ENCODE measurements at regions of chr12 and their contacts with region 1.

Region 1: GRCh38 chr12:55973598-55974307 is at the start of gene RAB5B:
- DNase-seq: peak; percentile 81 to 100 (median 98)
- ATAC-seq: peak; percentile 92
- H3K4me3 ChIP-seq: peak within 1 kb of the TSS; percentile 84
- H3K4me3 Mint-ChIP-seq: no peak within 1 kb of the TSS
- H3K27ac ChIP-seq: peak within 1 kb of the TSS; percentile 88
- H3K27ac Mint-ChIP-seq: no peak within 1 kb of the TSS
- H3K4me1 ChIP-seq: peaks cover 8 to 19% of the 10 kb centered on the region in 2 donors
- H3K4me1 Mint-ChIP-seq: peaks cover 18 to 31% (median 26%) of the 10 kb centered on the region in 7 donors
- H3K27me3 ChIP-seq: no peaks in the 10 kb centered on the region
- H3K27me3 Mint-ChIP-seq: no peaks in the 10 kb centered on the region
- total RNA-seq, gene RAB5B: 45.2 to 109 (median 62.7) TPM

Region 2: DNA sequence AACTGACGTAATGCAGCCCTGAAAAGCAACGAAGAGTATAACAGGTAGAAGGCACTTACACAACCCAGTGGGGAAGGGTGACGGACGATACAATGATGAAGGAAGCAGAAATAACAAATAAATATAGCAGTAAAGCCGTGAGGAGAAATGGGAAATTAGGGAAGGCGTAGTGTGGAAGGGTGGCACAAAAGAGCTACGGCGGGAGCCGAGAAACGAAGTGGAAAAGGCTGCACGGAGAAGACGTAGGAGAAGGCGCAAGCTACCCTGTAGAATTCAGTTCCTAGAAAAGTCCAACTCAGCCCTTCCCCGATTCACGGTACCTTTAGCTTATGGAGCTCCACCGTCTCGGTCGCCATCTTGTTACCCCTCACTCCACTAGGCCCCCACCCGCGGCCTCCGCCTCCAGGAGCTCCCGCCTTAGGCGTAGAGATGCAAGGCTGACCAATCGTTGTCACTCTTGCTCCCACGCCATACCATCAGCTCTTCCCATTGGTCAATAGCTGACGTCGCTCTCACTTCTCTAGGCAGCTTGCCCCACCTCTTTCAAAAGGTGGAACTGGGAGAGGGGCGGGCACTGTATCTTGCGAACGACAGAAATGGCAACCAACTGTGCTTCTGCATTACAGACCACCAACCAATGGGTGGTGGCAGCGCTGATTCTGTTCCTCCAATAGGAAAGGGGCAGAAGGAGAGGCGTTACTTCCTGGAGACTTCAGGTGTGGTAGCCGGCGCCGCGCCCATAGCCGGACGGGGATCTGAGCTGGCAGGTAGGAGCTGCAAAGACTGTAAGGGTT is 156.2 kb before region 1 on chr12 and contains the starts of genes ORMDL2 and SARNP:
- CTCF ChIA-PET with region 1: interaction called, 7 read pairs
- POLR2A ChIA-PET with region 1: interaction called, 11 read pairs
- intact Hi-C with region 1: loop called (anchors 1 kb)
- DNase-seq: peak; percentile 81 to 99 (median 98)
- ATAC-seq: peak; percentile 96
- H3K4me3 ChIP-seq: peak within 1 kb of the TSS; percentile 94
- H3K4me3 Mint-ChIP-seq: no peak within 1 kb of the TSS
- H3K27ac ChIP-seq: peak within 1 kb of the TSS; percentile 88
- H3K27ac Mint-ChIP-seq: no peak within 1 kb of the TSS
- H3K4me1 ChIP-seq: peaks cover 22 to 41% of the 10 kb centered on the region in 2 donors
- H3K4me1 Mint-ChIP-seq: peaks cover 32 to 45% (median 37%) of the 10 kb centered on the region in 7 donors
- H3K27me3 ChIP-seq: no peaks in the 10 kb centered on the region
- H3K27me3 Mint-ChIP-seq: no peaks in the 10 kb centered on the region
- total RNA-seq, gene ORMDL2: 12.3 to 67.3 (median 40.5) TPM
- total RNA-seq, gene SARNP: 28.0 to 73.0 (median 41.7) TPM

Region 3: DNA sequence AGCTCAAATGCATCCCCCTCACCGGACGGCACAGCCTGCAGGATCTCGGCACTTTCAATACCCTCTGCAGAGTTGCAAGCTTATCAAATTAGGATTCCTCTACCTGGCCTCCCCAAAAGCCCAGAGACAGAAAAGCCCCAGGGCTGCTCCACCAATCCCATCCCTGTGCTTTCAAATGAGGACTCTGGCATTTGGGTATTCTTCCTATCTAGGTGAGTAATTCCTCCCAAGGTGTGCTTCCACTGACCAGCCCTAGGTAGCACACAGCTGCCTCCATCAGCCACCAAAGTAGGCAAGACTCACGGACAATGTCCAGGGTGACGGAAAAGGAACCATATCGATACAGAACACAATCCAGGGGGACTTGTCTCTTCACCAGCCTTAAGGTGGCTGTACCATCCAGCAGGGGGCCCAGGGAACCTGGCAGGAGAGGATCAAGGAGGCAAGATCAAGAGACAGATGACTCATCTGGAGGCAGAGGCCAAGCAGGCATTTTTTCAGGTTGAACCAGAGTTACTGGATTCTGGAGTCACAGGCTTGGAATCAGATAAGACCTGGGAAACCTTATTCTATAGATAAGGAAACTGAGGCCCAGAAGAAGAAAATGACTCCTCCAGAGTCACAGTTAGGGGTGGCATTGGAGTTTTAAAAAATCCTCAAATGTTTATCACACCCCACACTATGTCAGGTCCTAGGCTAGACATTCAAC is 17.8 kb before region 1 on chr12:
- CTCF ChIA-PET with region 1: interaction called, 3 read pairs
- POLR2A ChIA-PET with region 1: interaction called, 50 read pairs
- intact Hi-C with region 1: loop called in 1 of 2 experiments (anchors 2 kb)
- DNase-seq: peak in 4 of 9 donors; percentile 41 to 47 (median 44)
- ATAC-seq: peak; percentile 71
- H3K4me3 ChIP-seq: no peak overlapping the region
- H3K4me3 Mint-ChIP-seq: peak overlapping the region in 1 of 10 donors; percentile 21
- H3K27ac ChIP-seq: peak overlapping the region; percentile 22
- H3K27ac Mint-ChIP-seq: peak overlapping the region; percentile 6 to 90 (median 78)
- H3K4me1 ChIP-seq: peaks cover 4 to 8% of the 10 kb centered on the region in 2 donors
- H3K4me1 Mint-ChIP-seq: peaks cover 12 to 38% (median 21%) of the 10 kb centered on the region in 7 donors
- H3K27me3 ChIP-seq: no peaks in the 10 kb centered on the region
- H3K27me3 Mint-ChIP-seq: no peaks in the 10 kb centered on the region

Region 4: DNA sequence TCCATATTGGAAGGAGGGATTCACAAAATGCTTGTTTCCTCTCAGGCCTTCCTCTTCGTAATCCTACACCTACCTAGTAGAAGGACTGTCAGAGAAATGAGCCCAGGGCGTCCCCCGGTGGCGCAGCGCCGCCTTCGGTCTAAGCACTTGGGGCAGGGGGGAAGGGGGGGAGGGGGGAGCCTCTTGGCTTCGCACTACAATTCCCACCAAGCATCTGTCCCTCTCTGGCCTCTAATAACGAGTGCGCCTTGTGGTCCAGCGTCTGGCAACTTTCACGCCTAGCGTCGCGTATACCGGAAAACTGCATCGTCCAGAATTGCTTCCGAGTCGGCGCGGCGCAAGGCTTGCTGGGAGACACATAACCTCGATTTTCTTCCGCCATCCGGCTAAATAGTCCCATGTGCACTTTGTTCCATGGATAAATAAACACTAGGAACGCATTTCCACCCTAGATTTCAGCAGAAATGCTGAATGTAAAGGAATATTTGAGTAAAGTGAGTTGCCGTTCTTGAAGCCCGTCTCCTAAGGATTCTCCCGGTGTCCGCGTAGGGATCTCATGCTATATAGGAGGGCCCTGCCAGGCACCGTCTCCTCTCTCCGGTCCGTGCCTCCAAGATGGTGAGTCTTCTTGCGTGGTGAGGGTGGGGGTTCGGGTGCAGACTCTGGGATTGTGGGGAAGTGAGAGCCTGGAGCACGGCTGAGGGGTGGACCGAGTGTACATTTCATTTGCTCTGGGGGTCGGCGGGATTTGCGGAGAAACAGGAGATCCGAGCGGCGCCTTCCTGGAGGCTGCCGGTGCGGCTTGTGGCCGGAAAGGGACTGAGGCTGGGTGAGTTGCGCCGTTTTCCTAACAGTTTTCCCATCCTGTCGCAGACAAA is 68.0 kb after region 1 on chr12 and contains the start of gene RPS26:
- CTCF ChIA-PET with region 1: no interaction called
- POLR2A ChIA-PET with region 1: interaction called, 7 read pairs
- intact Hi-C with region 1: loop called (anchors 1 kb)
- DNase-seq: peak; percentile 75 to 97 (median 94)
- ATAC-seq: peak; percentile 94
- H3K4me3 ChIP-seq: peak within 1 kb of the TSS; percentile 100
- H3K4me3 Mint-ChIP-seq: peak within 1 kb of the TSS; percentile 91 to 100 (median 98)
- H3K27ac ChIP-seq: peak within 1 kb of the TSS; percentile 84
- H3K27ac Mint-ChIP-seq: peak within 1 kb of the TSS; percentile 94 to 99 (median 97)
- H3K4me1 ChIP-seq: peaks cover 16 to 19% of the 10 kb centered on the region in 2 donors
- H3K4me1 Mint-ChIP-seq: peaks cover 14 to 56% (median 34%) of the 10 kb centered on the region in 7 donors
- H3K27me3 ChIP-seq: no peaks in the 10 kb centered on the region
- H3K27me3 Mint-ChIP-seq: no peaks in the 10 kb centered on the region
- total RNA-seq, gene RPS26: 40.8 to 64.5 (median 46.4) TPM

Region 5: GRCh38 chr12:56152318-56153033 is 178.7 kb after region 1 on chr12 and contains the start of gene MYL6B:
- CTCF ChIA-PET with region 1: no interaction called
- POLR2A ChIA-PET with region 1: no interaction called
- intact Hi-C with region 1: loop called (anchors 1 to 5 kb)
- DNase-seq: peak; percentile 79 to 94 (median 87)
- ATAC-seq: peak; percentile 98
- H3K4me3 ChIP-seq: peak within 1 kb of the TSS; percentile 86
- H3K4me3 Mint-ChIP-seq: peak within 1 kb of the TSS; percentile 80 to 96 (median 92)
- H3K27ac ChIP-seq: peak within 1 kb of the TSS; percentile 80
- H3K27ac Mint-ChIP-seq: peak within 1 kb of the TSS; percentile 84 to 99 (median 97)
- H3K4me1 ChIP-seq: peaks cover 22 to 25% of the 10 kb centered on the region in 2 donors
- H3K4me1 Mint-ChIP-seq: peaks cover 17 to 55% (median 39%) of the 10 kb centered on the region in 7 donors
- H3K27me3 ChIP-seq: no peaks in the 10 kb centered on the region
- H3K27me3 Mint-ChIP-seq: no peaks in the 10 kb centered on the region
- total RNA-seq, gene MYL6B: 3.7 to 60.3 (median 8.9) TPM

Region 6: DNA sequence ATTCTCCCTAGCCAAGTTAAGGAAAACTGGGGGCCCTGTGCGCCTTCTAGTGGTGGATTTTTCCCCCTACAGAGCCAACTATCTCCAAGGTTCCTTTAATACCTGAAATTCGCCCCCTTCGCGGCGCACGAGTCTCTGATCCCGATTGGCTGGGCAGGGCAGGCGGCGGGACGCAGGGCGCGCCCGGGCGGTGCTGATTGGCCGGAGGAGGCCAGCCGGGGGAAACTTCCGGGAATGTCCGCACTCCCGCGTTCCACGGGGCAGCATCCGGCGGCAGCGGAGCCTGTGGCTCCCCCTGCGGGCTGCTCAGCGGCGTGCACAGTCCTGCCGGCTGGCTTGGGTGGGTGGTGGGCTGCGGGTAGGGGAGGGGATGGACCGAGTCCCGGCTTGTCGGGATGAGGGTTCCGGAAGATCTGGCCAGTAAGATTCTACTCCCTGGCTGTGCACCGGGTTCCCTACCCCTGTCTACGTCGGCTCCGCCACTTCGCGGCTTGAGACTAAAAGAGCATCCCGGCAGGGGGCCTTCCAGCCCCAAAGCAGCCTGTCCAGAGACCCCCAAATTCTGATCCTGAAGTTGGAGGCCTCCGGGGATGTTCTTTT is 250.4 kb after region 1 on chr12 and contains the start of gene NABP2:
- CTCF ChIA-PET with region 1: interaction called, 5 read pairs
- POLR2A ChIA-PET with region 1: interaction called, 4 read pairs
- intact Hi-C with region 1: loop called in 1 of 2 experiments (anchors 2 kb)
- DNase-seq: peak; percentile 78 to 97 (median 81)
- ATAC-seq: peak; percentile 85
- H3K4me3 ChIP-seq: peak within 1 kb of the TSS; percentile 82
- H3K4me3 Mint-ChIP-seq: peak within 1 kb of the TSS; percentile 77 to 99 (median 87)
- H3K27ac ChIP-seq: peak within 1 kb of the TSS; percentile 98
- H3K27ac Mint-ChIP-seq: peak within 1 kb of the TSS; percentile 78 to 100 (median 91)
- H3K4me1 ChIP-seq: peaks cover 22 to 27% of the 10 kb centered on the region in 2 donors
- H3K4me1 Mint-ChIP-seq: peaks cover 16 to 57% (median 46%) of the 10 kb centered on the region in 7 donors
- H3K27me3 ChIP-seq: no peaks in the 10 kb centered on the region
- H3K27me3 Mint-ChIP-seq: peaks cover 0 to 3% (median 0%) of the 10 kb centered on the region in 5 donors
- total RNA-seq, gene NABP2: 9.2 to 61.2 (median 11.8) TPM

Region 7: GRCh38 chr12:56359851-56360767 is 386.4 kb after region 1 on chr12 and contains the start of gene STAT2:
- CTCF ChIA-PET with region 1: no interaction called
- POLR2A ChIA-PET with region 1: no interaction called
- intact Hi-C with region 1: loop called in 1 of 2 experiments (anchors 2 kb)
- DNase-seq: peak; percentile 94 to 100 (median 99)
- ATAC-seq: peak; percentile 97
- H3K4me3 ChIP-seq: peak within 1 kb of the TSS; percentile 89
- H3K4me3 Mint-ChIP-seq: peak within 1 kb of the TSS; percentile 83 to 99 (median 96)
- H3K27ac ChIP-seq: peak within 1 kb of the TSS; percentile 79
- H3K27ac Mint-ChIP-seq: peak within 1 kb of the TSS; percentile 90 to 98 (median 96)
- H3K4me1 ChIP-seq: peaks cover 16 to 17% of the 10 kb centered on the region in 2 donors
- H3K4me1 Mint-ChIP-seq: peaks cover 14 to 40% (median 27%) of the 10 kb centered on the region in 7 donors
- H3K27me3 ChIP-seq: no peaks in the 10 kb centered on the region
- H3K27me3 Mint-ChIP-seq: no peaks in the 10 kb centered on the region
- total RNA-seq, gene STAT2: 119 to 291 (median 182) TPM

Measured in naive thymus-derived CD4-positive, alpha-beta T cell (primary cell).